ENCODE measurements at regions of chr7 and their contacts with region 1.

Region 1: DNA sequence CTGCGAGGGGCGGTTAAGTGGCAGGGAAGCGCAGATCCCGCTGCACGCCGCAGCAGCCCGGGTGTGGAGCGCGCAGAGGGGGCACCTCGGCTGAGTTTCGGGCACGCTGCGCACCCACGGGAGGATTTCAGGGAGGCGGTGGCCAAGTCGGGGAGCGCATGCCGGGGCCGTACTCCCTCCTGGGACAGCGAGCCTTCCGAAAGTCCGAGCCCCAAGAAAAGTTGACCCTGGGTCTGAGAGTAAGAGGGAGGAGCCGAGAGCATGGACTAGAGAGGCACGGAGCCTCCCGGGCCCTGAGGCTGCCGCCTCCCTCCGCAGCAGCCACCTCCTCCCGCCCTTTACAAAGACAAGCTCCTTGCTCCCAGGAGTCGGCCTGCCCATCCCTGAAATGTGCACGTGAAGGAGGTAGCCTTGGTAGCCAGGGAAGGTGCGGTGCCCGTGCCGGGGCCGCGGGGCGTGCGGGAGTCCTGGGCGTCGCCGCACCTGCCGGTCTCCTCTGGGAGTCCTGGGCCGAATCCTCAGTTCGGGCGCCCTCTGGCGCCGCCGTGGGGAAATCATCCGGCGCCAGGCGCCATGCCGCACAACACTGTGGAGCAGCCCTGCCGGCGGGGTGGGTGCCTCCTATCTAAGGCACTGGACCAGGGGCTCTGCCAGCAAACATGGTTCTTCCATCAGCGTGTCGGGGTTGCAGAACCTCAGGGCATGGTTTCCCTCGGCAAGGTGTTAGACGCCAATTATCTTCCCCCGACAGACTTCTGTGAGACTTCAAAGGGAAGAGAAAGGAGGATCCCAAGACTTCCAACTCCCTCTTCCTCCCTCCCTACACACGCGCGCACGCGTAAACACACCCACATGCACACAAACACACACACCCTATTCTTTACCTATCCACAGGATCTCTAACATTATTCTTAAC is 104.0 kb downstream of the TRIL start:
- DNase-seq: peak; percentile 94
- H3K4me3 ChIP-seq: peak overlapping the region; percentile 59 to 67 (median 62)
- H3K27ac ChIP-seq: peak overlapping the region; percentile 17 to 52 (median 30)
- H3K4me1 ChIP-seq: peaks cover 5 to 24% (median 13%) of the 10 kb centered on the region in 4 donors
- H3K27me3 ChIP-seq: peaks cover 0 to 6% (median 2%) of the 10 kb centered on the region in 4 donors
- CTCF ChIP-seq: peak; percentile 86 to 92 (median 87)
- EP300 ChIP-seq: no peak
- POLR2A ChIP-seq: no peak

Region 2: GRCh38 chr7:28298870-28299518 is 555.1 kb before region 1 on chr7:
- intact Hi-C with region 1: loop called (anchors 2 kb)
- DNase-seq: no peak
- H3K4me3 ChIP-seq: no peak overlapping the region
- H3K27ac ChIP-seq: no peak overlapping the region
- H3K4me1 ChIP-seq: peaks cover 0 to 6% (median 0%) of the 10 kb centered on the region in 4 donors
- H3K27me3 ChIP-seq: no peaks in the 10 kb centered on the region
- CTCF ChIP-seq: peak; percentile 49 to 62 (median 59)
- EP300 ChIP-seq: no peak
- POLR2A ChIP-seq: no peak

Region 3: DNA sequence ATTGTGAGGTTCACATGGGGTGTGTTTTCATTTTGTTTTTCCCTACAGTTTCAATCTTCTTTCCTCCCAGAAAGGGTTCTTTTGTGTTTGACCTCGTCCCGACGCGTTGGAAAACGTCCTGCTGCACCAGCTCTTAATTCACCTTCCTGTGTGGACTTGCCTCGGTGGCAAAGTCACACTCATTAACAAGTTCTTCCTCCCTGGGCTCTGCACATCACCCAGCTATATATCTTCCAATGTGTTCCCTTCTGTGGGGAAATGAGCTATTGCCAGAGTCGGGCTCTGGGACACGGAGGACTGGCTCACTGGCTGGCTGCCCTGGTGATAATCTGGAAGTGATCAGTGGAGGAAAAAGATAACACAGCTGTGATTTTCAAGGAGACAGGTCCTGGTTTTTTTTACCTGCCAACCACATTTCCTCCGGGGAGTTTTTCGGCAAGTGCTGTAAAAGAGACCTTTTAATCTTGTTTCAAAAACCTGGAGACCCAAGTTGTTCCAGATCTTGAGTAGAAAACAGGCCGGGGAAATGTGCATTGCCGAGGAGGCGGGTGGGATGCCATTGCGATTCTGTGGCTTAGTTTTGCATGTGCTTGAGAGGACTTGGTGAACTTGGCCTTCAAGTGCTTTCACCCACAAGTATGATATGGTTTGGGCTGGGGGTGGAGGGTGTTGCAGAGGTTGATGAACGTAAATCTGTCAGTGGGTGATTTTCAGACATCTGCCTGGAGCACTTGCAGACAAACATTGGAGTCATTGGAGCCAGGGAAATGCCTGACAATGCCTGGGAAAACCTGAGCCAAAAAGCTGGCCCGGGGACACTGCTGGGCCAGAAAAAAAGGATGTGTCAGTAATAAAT is 538.3 kb before region 1 on chr7:
- intact Hi-C with region 1: no loop called
- DNase-seq: no peak
- H3K4me3 ChIP-seq: peak overlapping the region in 1 of 4 donors; percentile 23
- H3K27ac ChIP-seq: peak overlapping the region in 2 of 4 donors; percentile 1 to 20
- H3K4me1 ChIP-seq: peaks cover 0 to 6% (median 2%) of the 10 kb centered on the region in 4 donors
- H3K27me3 ChIP-seq: peaks cover 0 to 27% (median 0%) of the 10 kb centered on the region in 4 donors
- CTCF ChIP-seq: no peak
- EP300 ChIP-seq: no peak
- POLR2A ChIP-seq: no peak

Region 4: DNA sequence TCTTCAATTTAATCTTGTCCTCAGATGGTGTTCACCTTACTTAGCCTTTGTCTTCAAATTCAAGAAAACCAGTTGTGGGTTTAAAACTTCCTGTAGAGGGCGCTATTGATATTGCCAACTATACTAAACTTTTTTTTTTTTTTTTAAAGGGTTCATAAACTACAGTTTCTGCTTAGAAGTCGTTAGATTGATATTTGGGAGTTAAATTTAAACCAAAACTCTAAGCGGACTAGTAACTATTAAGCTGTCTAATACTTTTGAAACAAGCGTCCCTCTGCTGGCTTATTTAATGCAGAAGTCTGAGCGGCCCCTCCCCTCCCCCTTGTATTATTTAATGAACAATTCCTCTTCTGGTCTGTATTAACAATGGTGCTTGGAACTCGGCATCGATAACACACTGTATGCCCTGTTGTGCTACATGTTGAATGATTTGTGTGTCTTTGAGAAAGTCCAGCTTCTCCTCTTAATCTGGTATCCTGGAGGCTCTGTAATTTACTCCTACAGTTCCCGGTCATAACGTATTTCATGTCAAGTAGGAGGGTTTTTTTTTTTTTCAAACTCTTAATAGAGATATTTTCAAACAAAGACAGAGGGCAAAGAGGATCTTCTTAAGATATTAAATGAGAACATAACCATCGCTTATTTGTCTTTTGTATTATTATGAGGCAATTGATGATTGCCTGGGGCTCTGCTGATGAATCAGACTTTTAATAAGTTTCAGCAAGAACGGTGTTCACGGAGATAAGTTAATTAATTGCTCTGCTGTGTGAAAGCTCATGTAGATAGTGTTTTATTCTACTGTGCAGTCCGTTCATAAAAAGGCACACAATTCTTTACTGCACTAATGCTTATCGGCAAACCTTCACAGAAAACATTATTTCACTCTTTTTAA is 464.3 kb before region 1 on chr7:
- intact Hi-C with region 1: loop called (anchors 2 kb)
- DNase-seq: peak; percentile 57
- H3K4me3 ChIP-seq: peak overlapping the region; percentile 46 to 52 (median 50)
- H3K27ac ChIP-seq: peak overlapping the region in 3 of 4 donors; percentile 17 to 60 (median 59)
- H3K4me1 ChIP-seq: peaks cover 0 to 12% (median 12%) of the 10 kb centered on the region in 4 donors
- H3K27me3 ChIP-seq: no peaks in the 10 kb centered on the region
- CTCF ChIP-seq: peak; percentile 68 to 91 (median 86)
- EP300 ChIP-seq: no peak
- POLR2A ChIP-seq: no peak

Region 5: GRCh38 chr7:28536259-28536658 is 317.8 kb before region 1 on chr7:
- intact Hi-C with region 1: loop called (anchors 10 kb)
- DNase-seq: no peak
- H3K4me3 ChIP-seq: no peak overlapping the region
- H3K27ac ChIP-seq: no peak overlapping the region
- H3K4me1 ChIP-seq: peaks cover 14 to 21% (median 18%) of the 10 kb centered on the region in 4 donors
- H3K27me3 ChIP-seq: no peaks in the 10 kb centered on the region
- CTCF ChIP-seq: peak; percentile 52 to 73 (median 60)
- EP300 ChIP-seq: no peak
- POLR2A ChIP-seq: no peak

Region 6: DNA sequence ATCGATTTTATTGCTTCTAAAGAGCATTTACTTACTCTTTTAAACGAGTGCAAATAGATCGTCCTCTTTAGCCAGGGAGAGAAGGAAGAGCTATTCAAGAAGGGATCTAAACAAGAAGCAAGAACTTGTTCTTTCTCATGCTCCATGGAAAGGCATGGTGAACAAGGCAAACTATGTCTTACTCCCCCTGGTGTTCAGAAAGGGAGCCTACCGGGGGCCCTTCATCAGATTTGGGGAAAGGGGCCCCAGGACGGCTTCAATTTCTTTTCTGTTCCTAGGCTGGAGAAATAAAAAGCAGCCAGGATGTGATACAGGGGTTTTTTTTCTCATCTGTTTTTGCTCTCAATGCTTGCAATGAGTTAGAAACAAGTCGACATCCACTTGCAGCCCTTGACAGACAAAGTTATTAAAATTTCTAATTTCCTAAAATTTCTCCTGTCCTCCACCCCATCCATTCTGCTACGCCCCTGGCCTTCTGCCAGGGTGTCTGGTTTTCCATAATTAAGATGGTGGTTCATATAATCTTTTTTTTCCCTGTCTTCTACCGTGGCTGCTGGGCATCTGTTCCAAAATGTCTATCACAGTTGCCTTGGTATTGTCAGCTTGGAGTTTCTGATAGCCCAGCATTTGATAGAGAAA is 227.3 kb before region 1 on chr7:
- intact Hi-C with region 1: loop called (anchors 10 kb)
- DNase-seq: no peak
- H3K4me3 ChIP-seq: no peak overlapping the region
- H3K27ac ChIP-seq: peak overlapping the region in 3 of 4 donors; percentile 40 to 50 (median 49)
- H3K4me1 ChIP-seq: peaks cover 31 to 70% (median 52%) of the 10 kb centered on the region in 4 donors
- H3K27me3 ChIP-seq: no peaks in the 10 kb centered on the region
- CTCF ChIP-seq: peak; percentile 55 to 66 (median 63)
- EP300 ChIP-seq: no peak
- POLR2A ChIP-seq: no peak

Region 7: DNA sequence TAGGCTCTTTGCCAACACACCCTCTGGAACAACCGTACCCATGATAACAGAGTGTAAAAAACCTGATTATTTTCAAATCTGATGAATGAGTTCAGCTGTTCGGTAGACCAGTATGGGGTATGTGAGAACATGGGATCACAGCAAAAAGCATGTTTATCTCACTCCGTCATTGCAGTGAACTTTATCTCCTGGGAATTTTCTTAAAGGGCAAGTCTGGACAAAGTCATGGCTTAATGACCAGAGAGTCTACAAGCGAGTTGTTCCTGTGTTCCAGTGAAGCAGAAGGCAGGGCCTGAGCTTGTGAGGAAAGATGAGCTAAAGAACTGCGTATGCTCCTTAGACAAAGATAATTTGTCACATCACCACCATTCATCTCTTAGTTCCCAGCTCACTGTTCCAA is 115.7 kb before region 1 on chr7:
- intact Hi-C with region 1: no loop called
- DNase-seq: no peak
- H3K4me3 ChIP-seq: no peak overlapping the region
- H3K27ac ChIP-seq: no peak overlapping the region
- H3K4me1 ChIP-seq: peaks cover 0 to 10% (median 9%) of the 10 kb centered on the region in 4 donors
- H3K27me3 ChIP-seq: no peaks in the 10 kb centered on the region
- CTCF ChIP-seq: no peak
- EP300 ChIP-seq: no peak
- POLR2A ChIP-seq: no peak

Region 8: DNA sequence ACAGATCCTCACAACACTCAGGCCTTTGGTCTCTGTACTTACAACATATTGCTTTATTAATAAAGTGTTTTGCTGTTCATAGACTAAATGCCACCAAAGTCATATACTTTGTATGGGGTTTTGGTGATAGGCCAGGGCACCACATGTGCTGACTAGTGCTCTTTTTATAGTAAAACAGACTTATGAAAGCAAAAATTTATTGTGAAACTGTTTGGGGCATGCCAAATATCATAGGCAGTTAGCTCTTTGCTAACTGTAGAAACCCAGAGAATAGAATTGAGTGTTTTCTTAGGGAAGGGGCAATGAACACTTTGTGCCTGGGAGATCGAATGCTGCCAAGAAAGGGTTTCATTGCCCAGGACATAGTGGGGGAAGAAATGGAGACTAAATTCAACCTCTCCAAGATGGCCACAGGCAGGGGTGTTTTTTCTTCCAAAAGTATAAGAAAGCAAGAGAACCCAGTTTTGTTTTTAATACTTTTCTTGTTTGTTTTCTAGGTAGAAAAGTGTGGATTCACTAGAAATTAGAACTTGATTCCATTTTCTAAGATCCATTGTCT is 38.6 kb before region 1 on chr7:
- intact Hi-C with region 1: no loop called
- DNase-seq: no peak
- H3K4me3 ChIP-seq: no peak overlapping the region
- H3K27ac ChIP-seq: no peak overlapping the region
- H3K4me1 ChIP-seq: peaks cover 8 to 39% (median 34%) of the 10 kb centered on the region in 4 donors
- H3K27me3 ChIP-seq: no peaks in the 10 kb centered on the region
- CTCF ChIP-seq: no peak
- EP300 ChIP-seq: no peak
- POLR2A ChIP-seq: no peak